GM18951 (cell line): ENCODE measurements at regions of chr13 and their contacts with region 1.

Region 1: GRCh38 chr13:91381371-91381770 is 17.1 kb upstream of the GPC5 start:
- POLR2A ChIP-seq: no peak

Region 2: DNA sequence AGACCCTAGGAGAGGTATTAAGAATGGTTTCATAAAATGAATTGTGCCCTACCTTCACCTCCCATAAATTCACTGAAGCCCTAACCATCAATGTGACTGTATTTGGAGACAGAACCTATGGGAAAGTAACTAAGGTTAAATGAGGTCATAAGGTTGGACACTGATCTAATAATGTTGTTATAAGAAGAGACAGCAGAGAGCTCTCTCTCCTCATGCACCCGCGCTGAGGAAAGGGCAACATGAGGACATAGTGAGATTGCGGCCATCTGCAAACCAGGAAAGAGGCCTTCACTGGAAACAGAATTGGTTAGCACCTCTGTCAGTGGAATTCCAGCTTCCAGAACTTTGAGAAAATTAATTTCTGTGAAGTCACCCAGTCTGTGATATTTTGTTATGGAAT is 1430.0 kb before region 1 on chr13:
- in situ Hi-C with region 1: no loop called
- POLR2A ChIP-seq: no peak

Region 3: DNA sequence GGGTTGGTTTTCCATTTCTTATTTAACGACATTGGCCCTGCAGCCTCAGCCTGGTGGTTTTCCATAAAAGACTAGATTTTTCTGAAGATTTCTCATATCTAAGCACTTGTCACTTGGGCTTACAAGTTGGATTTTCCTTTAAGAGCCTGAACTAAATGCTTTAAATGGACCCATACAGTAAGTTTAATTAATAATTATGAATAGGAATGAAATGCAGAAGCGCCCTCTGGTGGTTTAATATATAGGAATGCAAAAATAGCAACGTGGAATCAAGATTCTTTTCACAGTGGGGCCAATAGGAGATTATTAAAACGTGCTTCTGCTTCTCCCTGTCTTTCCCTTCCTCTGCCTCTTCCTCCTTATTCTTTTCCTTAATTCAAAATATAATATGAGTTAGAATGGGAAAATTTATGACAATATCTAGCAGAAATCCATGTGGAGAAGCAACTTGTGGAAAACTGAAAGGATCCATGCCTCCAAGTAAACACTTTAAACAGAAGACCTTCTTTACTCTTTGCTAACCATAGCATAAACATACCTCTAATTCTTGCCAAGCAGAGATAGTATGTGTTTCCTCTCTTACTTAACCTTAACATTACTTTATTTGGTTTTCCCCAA is 341.0 kb after region 1 on chr13:
- in situ Hi-C with region 1: loop called (anchors 5 kb)
- POLR2A ChIP-seq: no peak

Region 4: DNA sequence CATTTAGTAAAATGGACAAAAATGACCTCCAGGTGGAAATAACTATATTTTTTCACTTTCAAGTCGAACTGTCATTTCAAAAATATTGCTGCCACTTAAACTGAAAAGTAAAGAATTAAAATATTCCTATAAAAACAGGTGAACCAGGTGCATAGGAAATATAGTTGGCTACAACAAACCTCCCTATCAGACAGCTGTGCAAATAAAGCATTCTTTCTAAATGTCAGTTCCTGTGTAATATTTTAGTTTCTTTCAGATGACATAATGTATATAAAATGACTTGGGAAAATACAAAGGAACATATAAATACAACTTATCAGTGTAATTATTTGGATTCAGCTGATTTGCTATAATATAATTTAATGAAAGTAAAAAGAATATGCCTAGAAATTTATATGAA is 1441.7 kb after region 1 on chr13:
- in situ Hi-C with region 1: no loop called
- POLR2A ChIP-seq: no peak